Transverse colon (tissue), 4 donors: ENCODE measurements at regions of chr18 and their contacts with region 1.

Region 1: GRCh38 chr18:28794459-28795245 is 617.7 kb upstream of the CDH2 start:
- DNase-seq: no peak
- H3K4me3 ChIP-seq: no peak overlapping the region
- H3K27ac ChIP-seq: no peak overlapping the region
- H3K4me1 ChIP-seq: no peaks in the 10 kb centered on the region
- H3K27me3 ChIP-seq: no peaks in the 10 kb centered on the region
- CTCF ChIP-seq: no peak
- EP300 ChIP-seq: no peak
- POLR2A ChIP-seq: no peak

Region 2: GRCh38 chr18:28657966-28658365 is 136.7 kb before region 1 on chr18:
- in situ Hi-C with region 1: loop called in 1 of 4 experiments (anchors 25 kb)
- intact Hi-C with region 1: no loop called
- DNase-seq: no peak
- H3K4me3 ChIP-seq: no peak overlapping the region
- H3K27ac ChIP-seq: no peak overlapping the region
- H3K4me1 ChIP-seq: no peaks in the 10 kb centered on the region
- H3K27me3 ChIP-seq: no peaks in the 10 kb centered on the region
- CTCF ChIP-seq: no peak
- EP300 ChIP-seq: no peak
- POLR2A ChIP-seq: no peak